GM10248 (cell line): ENCODE measurements at regions of chr10 and their contacts with region 1.

Region 1: GRCh38 chr10:69033256-69033655 is 44.7 kb downstream of the KIFBP start:
- DNase-seq: no peak
- CTCF ChIP-seq: no peak

Region 2: GRCh38 chr10:69045441-69046300 is 12.4 kb after region 1 on chr10:
- CTCF ChIA-PET with region 1: interaction called, 10 read pairs
- POLR2A ChIA-PET with region 1: no interaction called
- DNase-seq: peak; percentile 72
- CTCF ChIP-seq: no peak